ENCODE measurements at regions of chr11 and their contacts with region 1.

Region 1: DNA sequence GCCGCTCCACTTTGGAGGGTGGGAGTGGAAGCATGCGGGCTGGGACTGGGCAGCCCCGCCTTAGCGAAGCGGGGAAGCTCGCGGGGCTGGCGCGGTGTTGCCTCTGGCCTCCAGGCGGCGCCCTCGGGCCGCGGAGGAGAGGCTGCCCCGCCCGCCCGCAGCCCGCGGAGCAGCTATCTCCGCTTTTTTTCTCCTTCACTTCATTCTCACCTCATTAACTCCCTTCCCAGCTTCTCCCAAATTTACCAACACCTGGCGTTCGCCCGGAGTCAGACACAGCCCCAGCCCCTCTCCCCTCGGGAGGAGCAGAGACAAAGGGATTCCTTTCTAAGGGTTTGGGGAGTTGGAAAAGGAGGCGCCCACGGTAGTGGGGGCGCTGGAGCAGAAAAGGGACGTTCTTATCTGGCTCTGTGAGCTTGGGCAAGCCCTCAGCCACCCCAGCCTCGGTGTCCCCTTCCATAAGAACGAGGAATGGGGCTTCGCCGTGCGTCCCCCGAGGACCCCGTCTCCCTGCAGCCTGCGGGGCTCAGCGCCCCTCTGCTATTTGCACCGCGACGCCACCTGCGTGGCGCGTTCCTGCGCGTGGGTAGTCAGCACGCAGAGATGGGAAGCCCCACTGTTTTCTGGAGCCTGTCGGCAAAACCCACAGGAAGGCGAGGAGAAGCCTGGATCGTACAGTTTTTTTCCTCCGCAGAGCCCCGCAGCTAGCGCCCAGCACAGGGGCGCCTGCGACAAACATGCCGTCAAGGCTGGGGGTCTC is 1.5 kb upstream of the WNT11 start:
- DNase-seq: peak; percentile 81
- ATAC-seq: peak; percentile 75
- H3K4me3 Mint-ChIP-seq: peak overlapping the region; percentile 73
- H3K27ac Mint-ChIP-seq: no peak overlapping the region
- H3K4me1 Mint-ChIP-seq: peaks cover 17% of the 10 kb centered on the region
- H3K27me3 Mint-ChIP-seq: peaks cover 68% of the 10 kb centered on the region

Region 2: DNA sequence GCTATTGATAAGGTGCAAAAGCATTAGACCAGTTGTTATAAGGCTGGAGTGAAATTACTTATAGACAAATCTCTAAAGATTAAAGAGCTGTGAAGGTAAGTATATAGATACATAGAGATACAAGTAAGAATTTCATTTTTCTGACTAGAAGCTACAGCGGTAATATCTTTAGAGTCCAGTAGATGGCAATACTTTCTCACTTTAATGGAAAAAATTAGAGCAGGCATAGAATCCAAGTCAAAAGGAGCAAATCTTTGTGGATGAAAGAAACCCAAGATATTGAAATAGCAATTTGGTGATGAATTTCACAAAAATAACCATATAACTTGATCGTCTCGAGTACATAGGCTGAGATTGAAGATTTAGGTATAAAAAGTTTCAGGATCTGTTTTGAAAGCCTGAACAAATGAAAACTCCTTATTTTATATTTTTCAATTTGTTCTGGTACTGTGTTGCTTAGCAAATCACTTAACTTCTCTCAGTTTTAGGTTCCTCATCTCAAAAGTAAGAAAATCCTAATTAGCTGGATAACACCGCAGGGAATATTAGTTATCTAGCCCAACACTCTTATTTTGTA is 310.9 kb before region 1 on chr11:
- CTCF ChIA-PET with region 1: interaction called, 47 read pairs
- DNase-seq: no peak
- ATAC-seq: peak; percentile 47
- H3K4me3 Mint-ChIP-seq: no peak overlapping the region
- H3K27ac Mint-ChIP-seq: no peak overlapping the region
- H3K4me1 Mint-ChIP-seq: peaks cover 2% of the 10 kb centered on the region
- H3K27me3 Mint-ChIP-seq: no peaks in the 10 kb centered on the region

Region 3: DNA sequence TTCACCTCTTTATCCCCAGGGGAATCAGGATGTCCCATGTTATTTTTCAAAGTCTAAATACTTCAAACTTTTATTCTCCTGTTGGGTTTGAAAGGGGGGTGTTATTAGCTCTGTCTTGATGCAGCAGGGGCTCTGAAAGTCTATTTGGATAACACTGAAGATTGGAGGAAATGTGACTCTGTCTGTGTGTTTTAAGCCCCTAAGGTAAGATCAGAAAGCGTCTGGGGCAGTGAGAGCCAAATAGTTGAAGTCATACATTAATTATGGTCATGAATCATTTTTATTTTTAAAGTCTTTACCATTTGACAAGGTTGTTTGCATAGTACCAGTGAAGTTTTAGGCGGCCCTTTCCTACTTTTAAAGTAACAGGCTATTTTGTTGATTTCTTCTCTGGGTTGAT is 253.8 kb before region 1 on chr11:
- CTCF ChIA-PET with region 1: no interaction called
- DNase-seq: no peak
- ATAC-seq: no peak
- H3K4me3 Mint-ChIP-seq: no peak overlapping the region
- H3K27ac Mint-ChIP-seq: no peak overlapping the region
- H3K4me1 Mint-ChIP-seq: no peaks in the 10 kb centered on the region
- H3K27me3 Mint-ChIP-seq: no peaks in the 10 kb centered on the region

Region 4: DNA sequence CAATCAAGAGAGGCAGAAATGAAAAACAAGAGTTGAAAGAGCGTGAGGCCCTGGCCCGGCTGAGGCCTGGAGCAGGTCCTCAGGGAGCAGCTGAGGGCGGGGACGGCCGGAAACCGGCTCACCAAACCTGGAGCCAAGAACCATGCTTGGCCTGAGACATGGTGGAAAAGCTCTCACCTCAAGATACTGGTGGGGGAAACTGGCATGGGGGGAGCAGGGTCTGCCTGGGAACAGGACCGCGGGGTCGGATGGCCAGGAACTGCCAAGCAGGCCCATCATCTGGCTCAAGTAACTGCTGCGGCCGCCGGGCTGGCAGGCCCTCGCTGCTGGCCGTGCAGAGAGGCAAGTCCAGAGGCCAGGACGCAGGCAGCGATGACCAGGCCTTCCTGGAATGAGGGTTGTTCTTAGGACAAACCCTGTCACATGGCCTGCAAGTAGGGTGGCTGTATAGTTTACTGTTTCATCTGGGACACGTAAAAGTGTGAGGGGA is 17.3 kb after region 1 on chr11:
- CTCF ChIA-PET with region 1: interaction called, 61 read pairs
- DNase-seq: no peak
- ATAC-seq: no peak
- H3K4me3 Mint-ChIP-seq: no peak overlapping the region
- H3K27ac Mint-ChIP-seq: no peak overlapping the region
- H3K4me1 Mint-ChIP-seq: no peaks in the 10 kb centered on the region
- H3K27me3 Mint-ChIP-seq: peaks cover 26% of the 10 kb centered on the region

Region 5: DNA sequence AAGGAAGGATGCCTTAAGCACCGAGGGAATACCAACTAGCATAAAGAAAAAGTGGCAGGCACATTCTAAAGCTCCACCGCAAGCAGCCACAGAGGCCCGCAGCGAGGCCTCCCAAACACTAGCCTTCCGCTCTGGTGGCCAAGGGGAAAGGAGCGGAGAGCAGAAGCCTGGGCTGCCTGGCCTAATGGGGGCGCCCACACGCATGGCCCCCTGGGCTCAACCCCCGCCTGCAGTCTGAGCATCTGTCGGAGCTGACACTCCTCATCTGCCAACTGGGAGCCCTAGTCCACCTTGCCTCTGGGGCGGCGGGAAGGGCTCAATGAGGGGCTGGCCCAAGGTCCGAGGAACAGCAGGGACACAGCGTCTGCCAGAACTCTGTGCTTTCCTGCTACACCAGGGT is 48.6 kb after region 1 on chr11:
- CTCF ChIA-PET with region 1: interaction called, 14 read pairs
- DNase-seq: no peak
- ATAC-seq: no peak
- H3K4me3 Mint-ChIP-seq: no peak overlapping the region
- H3K27ac Mint-ChIP-seq: no peak overlapping the region
- H3K4me1 Mint-ChIP-seq: peaks cover 2% of the 10 kb centered on the region
- H3K27me3 Mint-ChIP-seq: peaks cover 13% of the 10 kb centered on the region

Region 6: DNA sequence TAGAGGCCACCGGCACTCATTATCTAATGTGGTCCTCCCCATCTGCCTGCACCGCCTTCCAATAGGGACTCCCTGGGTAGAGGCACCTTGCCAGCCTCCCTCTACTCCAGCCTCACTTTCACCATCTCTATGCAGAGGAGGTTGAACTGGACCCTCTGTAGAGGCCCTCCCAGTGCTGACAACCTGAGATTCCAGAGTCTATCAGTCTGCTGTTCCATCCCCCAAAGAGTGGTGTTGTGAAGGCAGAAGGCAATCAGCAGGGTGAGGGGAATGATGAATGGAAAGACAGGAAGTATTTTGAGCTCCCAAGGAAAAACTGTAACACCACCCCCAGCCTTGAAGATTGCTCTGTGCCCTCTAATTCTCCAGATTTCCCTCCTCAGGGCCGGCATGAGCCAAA is 95.2 kb after region 1 on chr11:
- CTCF ChIA-PET with region 1: interaction called, 298 read pairs
- DNase-seq: no peak
- ATAC-seq: no peak
- H3K4me3 Mint-ChIP-seq: no peak overlapping the region
- H3K27ac Mint-ChIP-seq: no peak overlapping the region
- H3K4me1 Mint-ChIP-seq: no peaks in the 10 kb centered on the region
- H3K27me3 Mint-ChIP-seq: peaks cover 50% of the 10 kb centered on the region

Region 7: DNA sequence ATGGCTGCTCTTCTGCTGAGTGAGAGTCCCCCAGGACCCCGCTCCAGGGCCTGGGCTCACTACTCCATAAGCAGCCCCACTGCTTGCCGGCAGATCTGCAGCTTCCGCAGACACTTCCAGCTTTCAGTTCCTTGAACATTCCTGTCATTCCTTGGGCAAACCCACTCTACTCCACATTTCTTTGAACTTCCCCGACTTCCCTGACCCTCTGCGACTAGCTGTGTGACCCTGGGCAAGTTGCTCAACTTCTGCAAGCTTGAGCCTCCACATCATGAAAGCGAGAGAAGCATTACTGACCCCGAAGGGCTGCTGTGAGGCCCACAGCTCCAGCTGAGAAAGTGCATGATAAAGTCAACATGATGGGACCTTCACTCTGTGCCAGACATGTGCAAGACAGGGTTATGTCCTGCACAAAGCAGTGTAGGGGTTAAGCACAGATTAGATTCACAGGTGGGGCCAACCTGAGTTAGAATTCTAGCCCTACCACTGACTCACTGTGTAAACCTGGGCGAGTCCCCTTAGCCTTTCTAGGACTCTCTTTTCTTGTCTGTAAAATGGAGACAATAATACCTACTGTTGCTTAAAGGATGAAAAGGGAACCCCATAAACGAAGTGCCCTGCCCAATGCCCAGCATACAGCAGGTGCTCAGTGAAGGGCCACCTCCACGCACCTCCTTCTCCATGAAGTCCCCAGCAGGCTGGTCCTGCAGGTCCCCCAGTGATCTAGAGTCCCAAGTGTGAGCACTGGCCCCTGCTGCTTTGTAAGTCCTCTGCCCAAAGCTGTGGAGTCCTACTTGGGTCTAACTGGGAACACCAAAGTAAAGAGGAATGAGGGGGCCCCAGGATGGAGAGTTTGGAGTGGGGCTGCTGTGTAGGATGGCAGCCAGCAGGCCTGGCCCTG is 121.5 kb after region 1 on chr11:
- CTCF ChIA-PET with region 1: interaction called, 298 read pairs
- DNase-seq: no peak
- ATAC-seq: no peak
- H3K4me3 Mint-ChIP-seq: no peak overlapping the region
- H3K27ac Mint-ChIP-seq: no peak overlapping the region
- H3K4me1 Mint-ChIP-seq: no peaks in the 10 kb centered on the region
- H3K27me3 Mint-ChIP-seq: peaks cover 15% of the 10 kb centered on the region

Region 8: GRCh38 chr11:76419896-76420295 is 212.1 kb after region 1 on chr11:
- CTCF ChIA-PET with region 1: interaction called, 10 read pairs
- DNase-seq: no peak
- ATAC-seq: no peak
- H3K4me3 Mint-ChIP-seq: no peak overlapping the region
- H3K27ac Mint-ChIP-seq: no peak overlapping the region
- H3K4me1 Mint-ChIP-seq: peaks cover 15% of the 10 kb centered on the region
- H3K27me3 Mint-ChIP-seq: peaks cover 11% of the 10 kb centered on the region

Measured in activated CD8-positive, alpha-beta memory T cell treated with anti-CD3 and anti-CD28 coated beads, Interleukin-2, amount 10 ng/mL, durations not matched to agents 7 days and 5 days (primary cell).